OCI-LY7 (cell line): ENCODE measurements at regions of chr2 and their contacts with region 1.

Region 1: DNA sequence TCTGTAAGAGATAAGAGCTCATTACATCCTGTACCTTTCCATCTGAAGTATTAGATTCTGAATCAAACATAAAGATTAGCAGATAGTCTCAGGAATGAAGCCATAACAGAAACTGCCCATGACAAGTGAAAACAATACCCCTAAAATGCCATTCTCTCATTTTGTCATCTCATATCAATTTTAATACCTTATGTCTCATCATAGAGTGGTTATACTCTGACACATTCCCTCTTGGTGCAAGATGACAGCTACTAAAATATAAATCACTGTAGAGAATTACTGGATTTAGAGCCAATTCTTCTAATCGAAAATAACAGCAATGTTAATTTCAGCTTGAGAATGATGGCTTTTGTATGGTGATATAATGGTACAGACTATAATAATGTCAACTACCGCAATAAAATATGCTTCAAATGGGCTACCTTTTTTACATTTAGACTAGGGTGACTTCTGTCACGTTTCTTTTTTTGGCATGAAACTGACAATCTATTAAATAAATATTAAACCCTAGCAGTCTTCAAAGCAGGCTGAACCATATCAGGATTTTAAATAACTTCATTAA is 125.1 kb upstream of the ITGA4 start:
- DNase-seq: no peak
- H3K4me3 ChIP-seq: no peak overlapping the region
- H3K27ac ChIP-seq: no peak overlapping the region
- H3K4me1 ChIP-seq: no peaks in the 10 kb centered on the region
- CTCF ChIP-seq: no peak

Region 2: DNA sequence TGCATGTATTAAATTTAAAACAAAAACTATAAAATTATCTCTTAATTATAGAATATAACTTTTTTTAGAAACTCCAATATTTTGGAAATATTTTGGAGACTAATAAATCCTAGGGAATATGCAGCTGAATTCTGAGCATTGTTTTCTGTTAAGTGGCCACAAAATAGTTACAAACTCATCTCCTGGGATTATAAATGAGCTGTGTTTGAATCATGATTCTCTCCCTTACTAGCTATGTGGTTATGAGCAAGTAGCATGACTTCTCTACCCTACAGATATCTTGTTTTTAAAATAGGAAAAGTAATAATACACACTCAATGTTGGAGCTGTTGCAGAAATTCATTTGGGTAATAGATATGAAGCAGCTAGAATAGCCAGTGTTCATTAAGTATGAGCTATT is 12.8 kb before region 1 on chr2:
- CTCF ChIA-PET with region 1: interaction called, 3 read pairs
- POLR2A ChIA-PET with region 1: interaction called, 261 read pairs
- intact Hi-C with region 1: no loop called
- DNase-seq: no peak
- H3K4me3 ChIP-seq: no peak overlapping the region
- H3K27ac ChIP-seq: no peak overlapping the region
- H3K4me1 ChIP-seq: peaks cover 4% of the 10 kb centered on the region
- CTCF ChIP-seq: no peak

Region 3: GRCh38 chr2:181499231-181499630 is 167.1 kb after region 1 on chr2:
- CTCF ChIA-PET with region 1: no interaction called
- POLR2A ChIA-PET with region 1: no interaction called
- intact Hi-C with region 1: no loop called
- DNase-seq: no peak
- H3K4me3 ChIP-seq: no peak overlapping the region
- H3K27ac ChIP-seq: no peak overlapping the region
- H3K4me1 ChIP-seq: no peaks in the 10 kb centered on the region
- CTCF ChIP-seq: no peak